ENCODE measurements at regions of chr3 and their contacts with region 1.

Region 1: GRCh38 chr3:73442886-73443285 is 181.9 kb downstream of the PDZRN3 start:
- DNase-seq: no peak

Region 2: DNA sequence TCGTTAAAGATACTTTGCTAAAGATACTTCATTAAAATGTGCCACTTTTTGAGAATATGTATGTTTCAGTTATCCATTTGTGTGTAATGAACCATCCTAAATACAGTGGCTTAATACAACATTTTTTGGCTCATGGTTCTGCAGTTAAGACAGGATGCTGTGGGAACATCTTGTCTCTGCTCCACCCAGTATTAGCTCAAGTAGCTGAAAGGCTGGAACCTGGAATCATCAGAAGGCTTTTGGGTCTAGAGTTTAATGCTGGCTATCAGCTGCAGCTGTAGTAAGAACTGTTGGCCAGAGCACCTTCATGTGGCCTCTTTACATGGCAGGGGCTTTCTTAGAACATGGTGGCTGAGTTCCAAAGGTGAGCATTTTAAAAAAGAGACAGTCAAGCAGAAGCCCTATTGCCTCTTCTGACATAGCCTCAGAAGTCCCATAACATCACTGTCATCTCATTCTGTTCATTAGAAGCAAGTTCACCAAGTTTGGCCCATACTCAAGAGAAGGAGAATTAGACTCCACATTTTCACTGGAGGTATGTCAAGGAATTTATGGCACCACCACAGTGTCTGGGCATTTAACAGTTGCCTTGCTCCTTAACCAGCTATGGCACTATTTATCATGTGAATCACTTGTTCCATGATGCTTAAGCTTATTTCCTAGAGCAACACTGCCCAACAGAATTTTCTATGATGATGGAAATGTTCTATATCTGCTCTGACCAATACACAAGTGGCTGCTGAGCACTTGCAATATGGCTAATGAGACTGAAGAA is 252.3 kb after region 1 on chr3:
- intact Hi-C with region 1: no loop called
- DNase-seq: no peak

Region 3: DNA sequence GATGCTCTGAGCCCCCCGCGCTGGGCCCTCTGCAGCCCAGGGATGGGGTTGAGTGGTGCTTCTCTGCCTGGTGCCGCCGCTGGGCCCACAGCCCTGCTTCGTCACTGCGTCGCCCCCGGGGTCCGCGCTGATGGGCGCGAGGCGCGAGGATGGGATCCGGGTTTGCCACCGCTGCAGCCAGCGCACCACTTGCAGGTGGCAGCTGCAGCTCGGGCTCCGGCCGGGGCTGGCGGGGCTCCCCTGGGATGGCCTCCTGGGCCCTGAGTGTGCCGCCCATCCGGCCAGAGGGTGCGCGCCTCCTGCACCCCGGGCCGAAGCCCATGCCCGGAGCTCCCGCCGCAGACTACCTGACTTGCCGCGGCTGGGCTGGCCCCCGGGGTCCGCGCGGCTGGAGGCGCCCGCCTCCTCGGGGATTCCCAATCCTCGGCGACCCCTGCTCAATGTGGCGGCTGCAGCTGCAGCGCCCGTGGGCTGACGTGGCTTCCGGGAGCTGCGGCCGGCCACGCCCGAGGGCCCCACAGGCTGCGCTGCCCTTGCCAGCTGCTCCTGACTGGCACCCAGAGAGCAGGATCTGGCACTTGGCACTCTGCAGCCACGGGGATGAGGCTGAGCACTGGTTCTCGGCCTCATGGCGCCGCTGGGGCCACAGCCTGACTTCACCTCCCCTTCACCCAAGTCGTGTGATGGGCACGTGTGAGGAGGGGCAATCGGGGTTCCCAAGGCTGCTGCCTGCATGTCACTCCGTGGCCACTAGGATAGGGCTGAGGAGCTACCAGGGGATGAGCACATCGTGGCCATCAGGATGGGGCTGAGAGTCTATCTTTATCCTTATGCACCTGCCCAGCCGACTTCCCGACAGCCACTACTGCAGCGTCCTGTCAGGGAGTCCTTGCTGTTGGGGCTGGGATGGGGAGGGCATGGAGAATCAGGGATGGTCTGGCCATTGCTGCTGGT is 1953.3 kb after region 1 on chr3:
- intact Hi-C with region 1: loop called in 1 of 2 experiments (anchors 5 kb)
- DNase-seq: no peak

Measured in posterior vena cava (tissue), 2 donors.